ENCODE measurements at regions of chr18 and their contacts with region 1.

Region 1: GRCh38 chr18:32072321-32072720 is 19.4 kb upstream of the RNF138 start:
- DNase-seq: peak; percentile 45
- ATAC-seq: no peak
- H3K4me3 ChIP-seq: no peak overlapping the region
- H3K4me3 Mint-ChIP-seq: no peak overlapping the region
- H3K27ac ChIP-seq: no peak overlapping the region
- H3K27ac Mint-ChIP-seq: no peak overlapping the region
- H3K4me1 ChIP-seq: no peaks in the 10 kb centered on the region
- H3K4me1 Mint-ChIP-seq: no peaks in the 10 kb centered on the region
- H3K27me3 ChIP-seq: no peaks in the 10 kb centered on the region
- H3K27me3 Mint-ChIP-seq: no peaks in the 10 kb centered on the region
- CTCF ChIP-seq: peak; percentile 71

Region 2: DNA sequence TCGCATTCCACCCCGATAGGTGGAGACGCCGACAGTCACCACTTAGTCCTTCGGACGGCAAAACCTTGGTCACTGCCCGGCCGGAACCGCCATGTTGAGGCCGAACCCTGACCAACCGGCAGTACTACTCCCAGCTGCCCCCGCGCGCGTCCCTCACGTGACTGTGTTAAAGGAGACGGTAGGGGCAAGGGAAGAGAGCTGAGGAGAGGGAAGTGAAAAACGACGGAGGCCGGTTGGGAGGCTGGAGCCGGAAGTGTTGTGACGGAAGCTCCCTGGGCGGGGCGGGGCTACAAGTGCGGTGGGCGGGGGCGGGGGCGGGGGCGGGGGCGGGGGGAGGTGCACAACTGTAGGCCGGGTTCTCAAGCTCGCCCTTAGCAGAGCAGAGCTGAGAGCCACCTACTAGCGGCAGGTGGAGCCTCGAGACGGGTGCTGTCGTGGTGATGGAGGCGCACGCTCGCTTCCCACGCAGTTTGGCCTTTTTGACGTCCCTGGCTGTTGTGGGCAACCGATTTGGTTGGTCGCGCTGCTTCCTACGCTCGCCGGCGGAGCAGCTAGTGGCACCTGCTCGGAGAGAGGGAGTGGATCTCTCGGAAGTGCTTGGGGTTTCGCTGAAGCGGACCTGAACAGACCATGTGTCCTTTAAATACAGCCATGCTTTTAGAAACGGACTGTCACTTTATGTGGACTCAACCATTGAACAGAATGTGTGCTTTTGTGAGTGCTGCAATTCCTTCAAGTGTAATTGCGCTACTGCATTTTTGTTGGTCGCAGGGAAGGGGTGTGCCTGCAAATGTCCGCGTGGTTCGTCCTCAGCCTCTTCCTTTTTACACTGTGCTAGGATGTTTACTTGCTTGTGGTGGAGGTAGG is 129.1 kb before region 1 on chr18 and contains the start of gene TRAPPC8:
- CTCF ChIA-PET with region 1: interaction called, 27 read pairs
- POLR2A ChIA-PET with region 1: no interaction called
- intact Hi-C with region 1: loop called (anchors 1 kb)
- DNase-seq: peak; percentile 98
- ATAC-seq: peak; percentile 80
- H3K4me3 ChIP-seq: peak within 1 kb of the TSS; percentile 83 to 97 (median 94)
- H3K4me3 Mint-ChIP-seq: peak within 1 kb of the TSS; percentile 100
- H3K27ac ChIP-seq: peak within 1 kb of the TSS; percentile 98
- H3K27ac Mint-ChIP-seq: peak within 1 kb of the TSS; percentile 100
- H3K4me1 ChIP-seq: peaks cover 24 to 31% of the 10 kb centered on the region in 2 donors
- H3K4me1 Mint-ChIP-seq: peaks cover 39% of the 10 kb centered on the region
- H3K27me3 ChIP-seq: no peaks in the 10 kb centered on the region
- H3K27me3 Mint-ChIP-seq: no peaks in the 10 kb centered on the region
- CTCF ChIP-seq: no peak
- total RNA-seq, gene TRAPPC8: 89.8 and 95.5 TPM in 2 replicates

Region 3: GRCh38 chr18:32018331-32019250 is 53.7 kb before region 1 on chr18 and contains the start of gene RNF125:
- CTCF ChIA-PET with region 1: interaction called, 27 read pairs
- POLR2A ChIA-PET with region 1: interaction called, 3 read pairs
- intact Hi-C with region 1: loop called (anchors 2 kb)
- DNase-seq: peak; percentile 89
- ATAC-seq: peak; percentile 82
- H3K4me3 ChIP-seq: peak within 1 kb of the TSS; percentile 82 to 93 (median 89)
- H3K4me3 Mint-ChIP-seq: peak within 1 kb of the TSS; percentile 100
- H3K27ac ChIP-seq: peak within 1 kb of the TSS; percentile 58 to 80
- H3K27ac Mint-ChIP-seq: peak within 1 kb of the TSS; percentile 97
- H3K4me1 ChIP-seq: peaks cover 14 to 20% of the 10 kb centered on the region in 2 donors
- H3K4me1 Mint-ChIP-seq: peaks cover 33% of the 10 kb centered on the region
- H3K27me3 ChIP-seq: no peaks in the 10 kb centered on the region
- H3K27me3 Mint-ChIP-seq: no peaks in the 10 kb centered on the region
- CTCF ChIP-seq: no peak
- total RNA-seq, gene RNF125: 5.6 and 6.4 TPM in 2 replicates

Region 4: DNA sequence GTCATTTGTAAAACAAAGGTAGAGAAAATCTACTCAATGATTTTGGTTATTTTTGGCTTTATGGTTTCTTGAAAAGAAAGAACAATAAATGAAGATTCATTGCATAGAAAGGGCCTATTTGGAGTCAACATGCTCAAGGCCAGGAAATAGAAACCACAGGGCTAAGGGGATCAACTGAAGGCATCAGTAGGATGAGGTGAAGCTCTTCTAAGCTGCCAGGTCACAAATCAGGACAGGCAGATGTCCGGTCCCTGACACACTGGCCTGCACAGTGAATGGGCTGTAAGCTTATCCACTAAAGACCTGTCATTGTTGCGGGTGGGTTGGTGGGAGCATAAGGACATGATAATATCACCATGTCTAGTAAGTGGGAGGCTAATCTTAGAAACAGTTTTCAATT is 12.3 kb before region 1 on chr18:
- CTCF ChIA-PET with region 1: interaction called, 11 read pairs
- POLR2A ChIA-PET with region 1: no interaction called
- intact Hi-C with region 1: no loop called
- DNase-seq: no peak
- ATAC-seq: no peak
- H3K4me3 ChIP-seq: no peak overlapping the region
- H3K4me3 Mint-ChIP-seq: no peak overlapping the region
- H3K27ac ChIP-seq: no peak overlapping the region
- H3K27ac Mint-ChIP-seq: no peak overlapping the region
- H3K4me1 ChIP-seq: no peaks in the 10 kb centered on the region
- H3K4me1 Mint-ChIP-seq: no peaks in the 10 kb centered on the region
- H3K27me3 ChIP-seq: no peaks in the 10 kb centered on the region
- H3K27me3 Mint-ChIP-seq: no peaks in the 10 kb centered on the region
- CTCF ChIP-seq: no peak

Region 5: GRCh38 chr18:32092422-32093101 is 20.2 kb after region 1 on chr18:
- CTCF ChIA-PET with region 1: interaction called, 12 read pairs
- POLR2A ChIA-PET with region 1: no interaction called
- intact Hi-C with region 1: no loop called
- DNase-seq: peak; percentile 98
- ATAC-seq: peak; percentile 90
- H3K4me3 ChIP-seq: peak overlapping the region; percentile 63 to 98 (median 90)
- H3K4me3 Mint-ChIP-seq: peak overlapping the region; percentile 93
- H3K27ac ChIP-seq: peak overlapping the region; percentile 100
- H3K27ac Mint-ChIP-seq: peak overlapping the region; percentile 98
- H3K4me1 ChIP-seq: peaks cover 35 to 40% of the 10 kb centered on the region in 2 donors
- H3K4me1 Mint-ChIP-seq: peaks cover 43% of the 10 kb centered on the region
- H3K27me3 ChIP-seq: no peaks in the 10 kb centered on the region
- H3K27me3 Mint-ChIP-seq: no peaks in the 10 kb centered on the region
- CTCF ChIP-seq: no peak

Region 6: DNA sequence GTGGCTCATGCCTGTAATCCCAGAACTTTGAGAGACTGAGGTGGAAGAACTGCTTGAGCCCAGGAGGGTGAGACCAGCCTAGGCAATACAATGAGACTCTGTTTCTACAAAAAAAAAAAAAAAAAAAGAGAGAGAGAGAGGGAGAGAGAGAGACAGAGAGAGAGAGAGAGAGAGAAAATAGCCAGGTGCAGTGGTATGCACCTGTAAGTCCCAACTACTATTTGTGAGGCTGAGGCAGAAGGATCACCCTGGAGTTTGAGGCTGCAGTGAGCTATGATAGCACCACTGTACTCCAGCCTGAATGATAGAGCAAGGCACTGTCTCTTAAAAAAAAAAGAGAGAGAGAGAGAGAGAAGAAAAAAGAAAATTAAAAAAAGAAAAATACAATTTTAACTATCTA is 1122.5 kb after region 1 on chr18:
- CTCF ChIA-PET with region 1: no interaction called
- POLR2A ChIA-PET with region 1: no interaction called
- intact Hi-C with region 1: no loop called
- DNase-seq: no peak
- ATAC-seq: no peak
- H3K4me3 ChIP-seq: no peak overlapping the region
- H3K4me3 Mint-ChIP-seq: no peak overlapping the region
- H3K27ac ChIP-seq: no peak overlapping the region
- H3K27ac Mint-ChIP-seq: no peak overlapping the region
- H3K4me1 ChIP-seq: no peaks in the 10 kb centered on the region
- H3K4me1 Mint-ChIP-seq: no peaks in the 10 kb centered on the region
- H3K27me3 ChIP-seq: no peaks in the 10 kb centered on the region
- H3K27me3 Mint-ChIP-seq: peaks cover under 1% of the 10 kb centered on the region
- CTCF ChIP-seq: no peak

Measured in B cell (primary cell).